T-cell (primary cell): ENCODE measurements at regions of chr11 and their contacts with region 1.

Region 1: DNA sequence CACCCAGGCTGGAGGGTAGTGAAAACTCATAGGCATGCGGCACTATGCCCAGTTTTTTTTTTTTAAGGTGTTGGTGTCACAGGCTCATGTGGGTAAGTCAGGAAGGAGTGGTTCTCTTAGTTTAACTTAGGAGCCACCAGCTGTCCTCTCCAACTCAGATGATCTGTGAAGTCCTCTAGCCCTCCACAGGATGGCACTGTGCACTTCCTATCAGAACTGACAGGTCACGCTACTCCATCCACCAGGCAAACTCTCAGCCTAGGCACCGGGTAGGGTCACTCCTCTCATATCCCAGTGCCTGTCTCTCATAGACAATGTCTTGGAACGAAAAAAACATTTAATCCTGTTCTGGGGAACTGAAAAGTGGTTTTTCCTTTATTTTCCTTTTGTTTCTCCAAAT is 16.5 kb downstream of the NAP1L4 start:
- DNase-seq: peak; percentile 19 to 75 (median 46)
- ATAC-seq: peak; percentile 85 to 95 (median 92)
- H3K4me3 ChIP-seq: no peak overlapping the region
- H3K4me3 Mint-ChIP-seq: no peak overlapping the region
- H3K27ac ChIP-seq: no peak overlapping the region
- H3K27ac Mint-ChIP-seq: peak overlapping the region in 1 of 2 donors; percentile 48
- H3K4me1 ChIP-seq: peaks cover 0 to 7% of the 10 kb centered on the region in 2 experiments
- H3K4me1 Mint-ChIP-seq: peaks cover 34 to 58% (median 38%) of the 10 kb centered on the region in 3 donors
- H3K27me3 ChIP-seq: no peaks in the 10 kb centered on the region
- H3K27me3 Mint-ChIP-seq: no peaks in the 10 kb centered on the region

Region 2: GRCh38 chr11:2963112-2963817 is 12.3 kb before region 1 on chr11:
- CTCF ChIA-PET with region 1: interaction called in 1 of 2 experiments, 4 read pairs
- POLR2A ChIA-PET with region 1: interaction called in 1 of 2 experiments, 11 read pairs
- DNase-seq: no peak
- ATAC-seq: no peak
- H3K4me3 ChIP-seq: no peak overlapping the region
- H3K4me3 Mint-ChIP-seq: no peak overlapping the region
- H3K27ac ChIP-seq: no peak overlapping the region
- H3K27ac Mint-ChIP-seq: no peak overlapping the region
- H3K4me1 ChIP-seq: no peaks in the 10 kb centered on the region
- H3K4me1 Mint-ChIP-seq: peaks cover 23 to 46% (median 25%) of the 10 kb centered on the region in 3 donors
- H3K27me3 ChIP-seq: no peaks in the 10 kb centered on the region
- H3K27me3 Mint-ChIP-seq: no peaks in the 10 kb centered on the region

Region 3: GRCh38 chr11:2992234-2992996 is 16.8 kb after region 1 on chr11 and contains the start of gene NAP1L4:
- CTCF ChIA-PET with region 1: interaction called in 1 of 2 experiments, 12 read pairs
- POLR2A ChIA-PET with region 1: interaction called, 3 to 4 read pairs
- DNase-seq: peak; percentile 86 to 99 (median 96)
- ATAC-seq: peak; percentile 82 to 86 (median 84)
- H3K4me3 ChIP-seq: peak within 1 kb of the TSS; percentile 70 to 93
- H3K4me3 Mint-ChIP-seq: peak within 1 kb of the TSS; percentile 85 to 99 (median 98)
- H3K27ac ChIP-seq: peak within 1 kb of the TSS; percentile 53
- H3K27ac Mint-ChIP-seq: peak within 1 kb of the TSS; percentile 97 to 98
- H3K4me1 ChIP-seq: peaks cover 17 to 27% of the 10 kb centered on the region in 2 experiments
- H3K4me1 Mint-ChIP-seq: peaks cover 24 to 33% (median 31%) of the 10 kb centered on the region in 3 donors
- H3K27me3 ChIP-seq: no peaks in the 10 kb centered on the region
- H3K27me3 Mint-ChIP-seq: no peaks in the 10 kb centered on the region
- total RNA-seq, gene NAP1L4: 253 to 388 (median 299) TPM

Region 4: DNA sequence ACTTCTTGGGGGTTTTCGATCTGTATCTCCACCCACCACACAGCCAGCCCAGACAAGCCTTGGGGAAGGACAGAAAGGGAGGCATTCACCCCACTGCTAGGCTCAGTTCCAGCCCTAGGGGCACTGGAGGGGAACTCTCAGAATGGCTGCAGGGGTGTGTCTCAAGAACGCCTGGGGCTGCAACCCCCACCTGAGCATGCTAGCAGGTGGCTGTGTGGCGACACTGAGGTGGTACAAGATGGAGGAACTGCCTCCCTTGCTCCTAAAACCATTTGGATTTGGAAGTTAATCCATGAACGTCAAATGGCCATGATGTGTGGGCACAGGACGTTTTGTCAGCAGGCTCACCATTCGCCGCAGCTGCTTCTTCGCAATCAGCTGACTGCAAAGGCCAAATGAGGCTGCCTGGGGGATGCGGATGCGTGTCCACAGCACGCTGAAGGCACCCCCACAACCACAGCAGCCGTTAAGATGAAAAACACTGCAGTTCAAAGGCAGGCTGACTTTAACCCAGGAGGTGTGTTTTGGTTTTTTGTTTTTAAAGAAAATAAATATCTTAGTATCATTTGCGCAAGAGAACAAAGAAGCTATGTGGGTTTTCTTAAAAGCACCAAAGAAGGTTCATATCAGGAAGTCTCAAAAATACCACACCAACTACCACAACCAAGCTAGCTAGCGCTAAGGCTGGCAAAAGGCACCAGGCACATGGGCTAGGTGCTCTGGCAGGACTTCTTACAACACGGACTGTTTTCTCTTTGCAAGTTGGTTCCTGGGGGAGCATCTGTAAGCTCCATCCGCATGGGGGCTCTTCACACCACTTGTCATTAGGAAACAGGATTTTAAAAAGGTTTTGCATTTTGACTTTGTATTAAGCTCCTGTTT is 38.7 kb after region 1 on chr11:
- CTCF ChIA-PET with region 1: interaction called, 12 to 20 read pairs
- POLR2A ChIA-PET with region 1: interaction called in 1 of 2 experiments, 4 read pairs
- DNase-seq: peak; percentile 68 to 95 (median 84)
- ATAC-seq: peak; percentile 88 to 92 (median 92)
- H3K4me3 ChIP-seq: peak overlapping the region in 1 of 2 donors; percentile 23
- H3K4me3 Mint-ChIP-seq: peak overlapping the region; percentile 62 to 72 (median 63)
- H3K27ac ChIP-seq: peak overlapping the region; percentile 78
- H3K27ac Mint-ChIP-seq: peak overlapping the region; percentile 94 to 96
- H3K4me1 ChIP-seq: peaks cover 19 to 81% of the 10 kb centered on the region in 2 experiments
- H3K4me1 Mint-ChIP-seq: peaks cover 40 to 83% (median 59%) of the 10 kb centered on the region in 3 donors
- H3K27me3 ChIP-seq: no peaks in the 10 kb centered on the region
- H3K27me3 Mint-ChIP-seq: no peaks in the 10 kb centered on the region

Region 5: GRCh38 chr11:3378426-3379423 is 403.1 kb after region 1 on chr11 and contains the start of gene ZNF195:
- CTCF ChIA-PET with region 1: no interaction called
- POLR2A ChIA-PET with region 1: no interaction called
- DNase-seq: peak; percentile 91 to 98 (median 96)
- ATAC-seq: peak; percentile 100
- H3K4me3 ChIP-seq: peak within 1 kb of the TSS; percentile 79 to 82
- H3K4me3 Mint-ChIP-seq: peak within 1 kb of the TSS; percentile 97 to 99 (median 98)
- H3K27ac ChIP-seq: peak within 1 kb of the TSS; percentile 58
- H3K27ac Mint-ChIP-seq: peak within 1 kb of the TSS; percentile 97
- H3K4me1 ChIP-seq: peaks cover 15 to 29% of the 10 kb centered on the region in 2 experiments
- H3K4me1 Mint-ChIP-seq: peaks cover 54 to 63% (median 59%) of the 10 kb centered on the region in 3 donors
- H3K27me3 ChIP-seq: no peaks in the 10 kb centered on the region
- H3K27me3 Mint-ChIP-seq: no peaks in the 10 kb centered on the region
- total RNA-seq, gene ZNF195: 22.9 to 35.8 (median 32.0) TPM